CD4-positive, alpha-beta T cell (primary cell): ENCODE measurements at regions of chr11 and their contacts with region 1.

Region 1: DNA sequence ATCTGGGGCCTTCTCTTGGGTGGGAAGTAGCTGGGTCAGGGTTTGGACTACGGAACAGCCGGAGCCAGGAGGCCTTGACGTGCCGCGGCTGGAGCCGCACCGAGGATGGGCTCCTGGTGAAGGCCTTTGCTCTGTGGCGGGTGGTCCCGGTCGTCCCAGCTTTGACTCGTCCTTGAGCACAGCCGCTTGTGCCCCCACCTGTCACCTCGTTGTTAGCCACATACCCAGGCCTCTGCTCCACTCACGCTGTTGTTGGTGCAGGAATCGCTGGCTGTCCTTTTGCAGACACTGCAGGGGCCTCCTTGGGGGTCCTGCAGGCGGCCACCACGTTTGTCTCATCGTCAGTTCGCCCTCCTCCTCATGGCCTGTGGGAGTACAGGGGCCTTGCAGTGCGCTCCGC is 17.1 kb downstream of the PHRF1 start:
- DNase-seq: no peak
- ATAC-seq: no peak
- H3K4me3 ChIP-seq: no peak overlapping the region
- H3K4me3 Mint-ChIP-seq: no peak overlapping the region
- H3K27ac ChIP-seq: no peak overlapping the region
- H3K27ac Mint-ChIP-seq: no peak overlapping the region
- H3K4me1 ChIP-seq: peaks cover 8% of the 10 kb centered on the region
- H3K4me1 Mint-ChIP-seq: peaks cover 5% of the 10 kb centered on the region
- H3K27me3 ChIP-seq: no peaks in the 10 kb centered on the region
- H3K27me3 Mint-ChIP-seq: no peaks in the 10 kb centered on the region
- CTCF ChIP-seq: no peak

Region 2: DNA sequence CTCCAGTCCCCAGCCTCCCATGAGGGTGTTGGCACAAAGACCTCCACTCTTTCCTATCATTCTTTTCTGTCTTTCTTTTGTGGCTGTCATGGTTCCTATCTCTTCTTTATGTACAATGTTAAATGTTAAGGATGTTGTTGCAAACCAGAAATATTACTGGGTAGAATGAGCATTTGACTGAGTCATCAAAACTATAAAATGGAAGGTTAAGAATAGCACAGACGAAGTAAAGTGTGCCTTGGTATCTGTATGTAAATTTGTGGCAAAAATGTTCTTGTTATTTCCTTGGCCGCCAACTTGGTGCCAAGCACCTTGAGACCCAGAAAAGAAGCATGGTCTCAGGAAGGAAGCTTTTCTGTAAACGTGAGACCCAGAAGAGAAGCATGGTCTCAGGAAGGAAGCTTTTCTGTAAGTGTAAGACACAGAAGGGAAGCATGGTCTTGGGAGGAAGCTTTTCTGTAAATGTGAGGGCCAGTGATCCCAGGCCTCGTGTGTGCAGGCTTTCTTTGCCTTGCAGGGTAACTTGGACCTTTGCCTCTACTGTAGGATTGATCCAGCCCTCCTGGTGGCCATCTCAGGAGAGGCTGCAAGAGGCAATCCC is 206.1 kb before region 1 on chr11:
- CTCF ChIA-PET with region 1: no interaction called
- POLR2A ChIA-PET with region 1: no interaction called
- intact Hi-C with region 1: no loop called
- DNase-seq: peak in 1 of 14 experiments; percentile 33
- ATAC-seq: no peak
- H3K4me3 ChIP-seq: no peak overlapping the region
- H3K4me3 Mint-ChIP-seq: no peak overlapping the region
- H3K27ac ChIP-seq: no peak overlapping the region
- H3K27ac Mint-ChIP-seq: no peak overlapping the region
- H3K4me1 ChIP-seq: peaks cover 13% of the 10 kb centered on the region
- H3K4me1 Mint-ChIP-seq: peaks cover 11% of the 10 kb centered on the region
- H3K27me3 ChIP-seq: no peaks in the 10 kb centered on the region
- H3K27me3 Mint-ChIP-seq: peaks cover 5% of the 10 kb centered on the region
- CTCF ChIP-seq: no peak

Region 3: DNA sequence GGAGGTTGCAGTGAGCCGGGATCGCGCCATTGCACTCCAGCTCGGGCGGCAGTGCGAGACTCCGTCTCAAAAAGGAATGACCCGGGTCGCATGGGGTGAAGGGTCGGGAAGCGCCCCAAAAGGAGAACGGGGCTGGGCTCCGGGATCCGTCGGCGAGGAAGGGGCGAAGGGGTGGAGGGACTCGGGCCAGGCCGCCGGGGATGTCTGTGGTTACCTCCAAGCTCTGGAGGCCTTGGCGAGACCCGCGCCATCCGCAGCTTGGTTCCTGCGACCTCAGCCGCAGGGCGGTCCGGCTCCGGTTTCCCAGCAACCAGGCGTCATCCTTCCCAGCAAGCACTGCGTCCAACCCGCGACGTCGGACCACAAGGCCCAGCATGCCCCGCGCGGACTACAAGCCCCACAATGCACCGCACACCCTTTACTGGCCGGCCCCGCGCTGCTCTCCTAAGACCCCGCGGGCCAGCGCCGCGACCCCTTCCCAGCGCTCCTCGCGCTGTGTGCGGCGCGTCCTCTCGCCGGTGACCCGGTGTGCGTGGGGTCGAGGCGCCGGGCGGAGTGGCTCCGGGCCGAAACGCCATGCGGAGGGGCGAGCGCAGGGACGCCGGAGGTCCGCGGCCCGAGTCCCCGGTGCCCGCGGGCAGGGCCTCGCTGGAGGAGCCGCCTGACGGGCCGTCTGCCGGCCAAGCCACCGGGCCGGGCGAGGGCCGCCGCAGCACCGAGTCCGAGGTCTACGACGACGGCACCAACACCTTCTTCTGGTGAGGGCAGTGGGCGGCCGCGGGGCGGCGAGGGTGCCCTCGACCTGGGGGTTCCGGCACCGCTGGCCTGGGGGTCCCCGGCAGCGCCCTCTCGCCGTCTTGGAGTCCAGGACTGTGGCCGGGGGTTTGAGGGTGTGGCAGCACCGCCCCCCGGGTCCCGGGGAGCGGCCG is 143.2 kb before region 1 on chr11 and contains the start of gene PTDSS2:
- CTCF ChIA-PET with region 1: no interaction called
- POLR2A ChIA-PET with region 1: no interaction called
- intact Hi-C with region 1: no loop called
- DNase-seq: peak; percentile 88 to 98 (median 94)
- ATAC-seq: peak; percentile 71
- H3K4me3 ChIP-seq: peak within 1 kb of the TSS; percentile 60
- H3K4me3 Mint-ChIP-seq: peak within 1 kb of the TSS; percentile 99
- H3K27ac ChIP-seq: peak within 1 kb of the TSS; percentile 84 to 89
- H3K27ac Mint-ChIP-seq: peak within 1 kb of the TSS; percentile 95
- H3K4me1 ChIP-seq: peaks cover 39% of the 10 kb centered on the region
- H3K4me1 Mint-ChIP-seq: peaks cover 30% of the 10 kb centered on the region
- H3K27me3 ChIP-seq: no peaks in the 10 kb centered on the region
- H3K27me3 Mint-ChIP-seq: no peaks in the 10 kb centered on the region
- CTCF ChIP-seq: no peak
- total RNA-seq, gene PTDSS2: 15.2 to 18.4 TPM

Region 4: GRCh38 chr11:610146-610801 is 16.9 kb after region 1 on chr11:
- CTCF ChIA-PET with region 1: no interaction called
- POLR2A ChIA-PET with region 1: interaction called, 3 read pairs
- intact Hi-C with region 1: loop called in 1 of 2 experiments (anchors 1 kb)
- DNase-seq: peak in 1 of 14 experiments; percentile 27
- ATAC-seq: no peak
- H3K4me3 ChIP-seq: no peak overlapping the region
- H3K4me3 Mint-ChIP-seq: no peak overlapping the region
- H3K27ac ChIP-seq: no peak overlapping the region
- H3K27ac Mint-ChIP-seq: peak overlapping the region; percentile 63
- H3K4me1 ChIP-seq: peaks cover 22% of the 10 kb centered on the region
- H3K4me1 Mint-ChIP-seq: peaks cover 12% of the 10 kb centered on the region
- H3K27me3 ChIP-seq: no peaks in the 10 kb centered on the region
- H3K27me3 Mint-ChIP-seq: no peaks in the 10 kb centered on the region
- CTCF ChIP-seq: no peak